PC-3 (cell line): ENCODE measurements at regions of chrX and their contacts with region 1.

Region 1: GRCh38 chrX:68354869-68355852 is 78.1 kb downstream of the OPHN1 start:
- DNase-seq: peak; percentile 54
- ATAC-seq: peak; percentile 91
- H3K4me3 ChIP-seq: no peak overlapping the region
- H3K27ac ChIP-seq: peak overlapping the region; percentile 82
- H3K4me1 ChIP-seq: peaks cover 18% of the 10 kb centered on the region
- H3K27me3 ChIP-seq: no peaks in the 10 kb centered on the region
- CTCF ChIP-seq: no peak

Region 2: DNA sequence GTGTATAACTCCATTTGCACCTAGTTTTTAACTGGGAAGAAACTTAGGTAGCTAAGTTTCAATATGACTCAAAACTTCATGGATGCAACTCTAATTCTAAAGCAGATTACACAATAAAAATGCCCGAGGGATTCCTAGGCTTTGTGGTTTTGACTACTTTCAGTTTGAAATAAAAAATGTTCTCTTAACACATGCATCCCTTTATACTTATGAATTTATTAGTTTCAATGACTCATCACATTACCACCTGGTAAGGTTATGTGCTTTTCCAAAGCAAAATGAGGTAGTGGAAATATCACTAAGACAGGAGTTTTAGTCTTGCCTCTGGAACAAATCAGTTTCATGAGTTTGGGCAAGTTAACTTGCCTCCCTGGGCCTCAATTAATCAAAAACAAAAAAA is 47.4 kb before region 1 on chrX:
- CTCF ChIA-PET with region 1: no interaction called
- POLR2A ChIA-PET with region 1: no interaction called
- intact Hi-C with region 1: loop called (anchors 5 kb)
- DNase-seq: peak; percentile 96
- ATAC-seq: peak; percentile 85
- H3K4me3 ChIP-seq: no peak overlapping the region
- H3K27ac ChIP-seq: peak overlapping the region; percentile 93
- H3K4me1 ChIP-seq: peaks cover 34% of the 10 kb centered on the region
- H3K27me3 ChIP-seq: no peaks in the 10 kb centered on the region
- CTCF ChIP-seq: no peak